ENCODE measurements at regions of chr22 and their contacts with region 1.

Region 1: GRCh38 chr22:20777420-20778177 is 3.7 kb downstream of the SERPIND1 start:
- DNase-seq: no peak
- H3K4me3 ChIP-seq: no peak overlapping the region
- H3K27ac ChIP-seq: no peak overlapping the region
- H3K4me1 ChIP-seq: peaks cover 0 to 5% (median 1%) of the 10 kb centered on the region in 4 experiments; a peak in 2 of 7 replicates
- H3K27me3 ChIP-seq: no peaks in the 10 kb centered on the region
- CTCF ChIP-seq: no peak
- EP300 ChIP-seq: no peak
- POLR2A ChIP-seq: no peak
- RAD21 ChIP-seq: 0 out of 4 replicates have a peak, but pooled peaks of 1 of the 2 experiments have one; percentile 12

Region 2: GRCh38 chr22:20758688-20759087 is 18.9 kb before region 1 on chr22:
- CTCF ChIA-PET with region 1: interaction called, 22 read pairs
- POLR2A ChIA-PET with region 1: no interaction called
- DNase-seq: no peak
- H3K4me3 ChIP-seq: no peak overlapping the region
- H3K27ac ChIP-seq: no peak overlapping the region
- H3K4me1 ChIP-seq: no peaks in the 10 kb centered on the region
- H3K27me3 ChIP-seq: no peaks in the 10 kb centered on the region
- CTCF ChIP-seq: peak; percentile 50 to 61 (median 60)
- EP300 ChIP-seq: no peak
- POLR2A ChIP-seq: no peak
- RAD21 ChIP-seq: peak; percentile 23 to 39; a peak in 3 of 4 replicates

Region 3: GRCh38 chr22:20852076-20852475 is 74.5 kb after region 1 on chr22:
- CTCF ChIA-PET with region 1: no interaction called
- POLR2A ChIA-PET with region 1: no interaction called
- DNase-seq: no peak
- H3K4me3 ChIP-seq: no peak overlapping the region
- H3K27ac ChIP-seq: no peak overlapping the region
- H3K4me1 ChIP-seq: peaks cover 0 to 9% (median 1%) of the 10 kb centered on the region in 4 experiments; a peak in 3 of 7 replicates
- H3K27me3 ChIP-seq: no peaks in the 10 kb centered on the region
- CTCF ChIP-seq: no peak
- EP300 ChIP-seq: no peak
- POLR2A ChIP-seq: no peak
- RAD21 ChIP-seq: no peak